Calu3 (cell line): ENCODE measurements at regions of chr11 and their contacts with region 1.

Region 1: GRCh38 chr11:59615637-59616395 is at the start of gene OSBP:
- DNase-seq: peak; percentile 96
- H3K4me3 Mint-ChIP-seq: peak within 1 kb of the TSS; percentile 99
- H3K27ac Mint-ChIP-seq: peak within 1 kb of the TSS; percentile 99
- H3K4me1 Mint-ChIP-seq: peaks cover 34% of the 10 kb centered on the region
- H3K27me3 Mint-ChIP-seq: no peaks in the 10 kb centered on the region
- CTCF ChIP-seq: no peak
- total RNA-seq, gene OSBP: 58.6 and 60.7 TPM in 2 replicates

Region 2: GRCh38 chr11:58963528-58964104 is 652.2 kb before region 1 on chr11:
- CTCF ChIA-PET with region 1: no interaction called
- intact Hi-C with region 1: no loop called
- DNase-seq: peak; percentile 10
- H3K4me3 Mint-ChIP-seq: no peak overlapping the region
- H3K27ac Mint-ChIP-seq: no peak overlapping the region
- H3K4me1 Mint-ChIP-seq: no peaks in the 10 kb centered on the region
- H3K27me3 Mint-ChIP-seq: peaks cover 66% of the 10 kb centered on the region
- CTCF ChIP-seq: no peak

Region 3: DNA sequence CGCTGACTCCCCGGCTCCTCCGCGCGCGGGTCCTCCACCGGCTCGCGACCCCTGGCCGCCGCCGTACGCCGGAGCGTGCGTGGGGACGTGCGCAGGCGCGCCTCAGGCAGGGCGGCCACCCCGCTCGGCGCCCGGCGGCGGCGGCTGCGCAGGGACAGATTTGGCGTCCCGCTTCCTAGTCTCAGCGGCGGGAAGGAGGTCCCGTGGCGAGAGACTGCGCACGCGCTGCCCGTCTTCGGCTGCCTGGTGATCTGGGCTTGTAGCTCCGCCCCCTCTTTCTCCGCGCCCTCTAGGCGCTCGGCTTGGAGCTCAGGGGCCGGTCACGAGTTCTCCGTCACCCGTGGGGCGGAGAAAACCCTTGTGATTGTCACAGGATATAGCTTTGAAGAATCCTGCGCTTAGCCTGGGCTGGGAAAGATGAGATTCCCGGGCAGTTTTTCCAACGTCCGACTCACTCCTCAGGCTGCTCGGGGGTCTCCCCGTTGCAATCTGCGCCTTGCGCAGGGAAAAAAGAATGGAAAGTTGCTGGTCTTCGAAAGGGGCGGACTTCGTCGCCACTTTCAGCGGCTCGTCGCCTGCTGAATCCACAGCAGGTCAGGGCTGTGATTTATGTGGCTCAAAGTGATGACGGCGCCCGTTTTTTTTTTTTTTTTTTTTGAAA is 53.3 kb after region 1 on chr11 and contains the start of gene PATL1:
- CTCF ChIA-PET with region 1: interaction called, 3 read pairs
- intact Hi-C with region 1: loop called (anchors 5 kb)
- DNase-seq: peak; percentile 98
- H3K4me3 Mint-ChIP-seq: peak within 1 kb of the TSS; percentile 88
- H3K27ac Mint-ChIP-seq: peak within 1 kb of the TSS; percentile 97
- H3K4me1 Mint-ChIP-seq: peaks cover 35% of the 10 kb centered on the region
- H3K27me3 Mint-ChIP-seq: no peaks in the 10 kb centered on the region
- CTCF ChIP-seq: no peak
- total RNA-seq, gene PATL1: 56.9 and 59.8 TPM in 2 replicates